Endothelial cell of umbilical vein (primary cell): ENCODE measurements at regions of chr6 and their contacts with region 1.

Region 1: DNA sequence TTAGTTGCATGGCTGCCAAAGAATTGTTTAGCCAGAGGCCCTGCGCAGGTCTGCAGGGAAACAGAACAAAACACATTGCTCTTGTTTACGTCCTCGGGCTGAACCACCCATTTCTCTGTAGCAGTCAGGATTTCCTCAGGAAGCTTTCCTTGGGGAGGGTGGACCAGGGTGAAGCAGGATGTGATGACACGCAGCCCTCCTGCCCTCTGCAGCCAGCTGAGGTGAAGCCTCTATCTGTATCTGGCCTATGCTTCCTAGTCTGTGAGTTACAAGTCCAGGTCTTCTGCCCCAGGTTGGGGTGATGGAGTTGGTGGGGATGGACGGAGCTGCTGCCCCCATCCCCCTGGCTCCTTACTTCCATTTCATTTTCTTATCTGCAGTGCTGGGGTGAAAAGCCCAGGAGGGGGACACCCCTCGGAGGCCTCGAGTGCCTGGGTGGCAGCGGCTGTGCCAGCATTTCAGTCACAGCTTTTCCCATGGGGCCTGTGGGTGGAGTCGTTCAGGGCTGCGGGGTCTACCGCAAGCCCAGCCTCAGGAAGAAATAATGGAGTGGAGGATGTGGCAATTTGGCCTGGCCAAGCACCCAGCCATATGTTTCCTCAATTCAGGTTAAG is 24.9 kb downstream of the SASH1 start:
- DNase-seq: peak; percentile 99
- H3K4me3 ChIP-seq: no peak overlapping the region
- H3K27ac ChIP-seq: peak overlapping the region; percentile 96
- H3K4me1 ChIP-seq: peaks cover 75% of the 10 kb centered on the region
- H3K27me3 ChIP-seq: no peaks in the 10 kb centered on the region
- CTCF ChIP-seq: no peak
- POLR2A ChIP-seq: no peak

Region 2: DNA sequence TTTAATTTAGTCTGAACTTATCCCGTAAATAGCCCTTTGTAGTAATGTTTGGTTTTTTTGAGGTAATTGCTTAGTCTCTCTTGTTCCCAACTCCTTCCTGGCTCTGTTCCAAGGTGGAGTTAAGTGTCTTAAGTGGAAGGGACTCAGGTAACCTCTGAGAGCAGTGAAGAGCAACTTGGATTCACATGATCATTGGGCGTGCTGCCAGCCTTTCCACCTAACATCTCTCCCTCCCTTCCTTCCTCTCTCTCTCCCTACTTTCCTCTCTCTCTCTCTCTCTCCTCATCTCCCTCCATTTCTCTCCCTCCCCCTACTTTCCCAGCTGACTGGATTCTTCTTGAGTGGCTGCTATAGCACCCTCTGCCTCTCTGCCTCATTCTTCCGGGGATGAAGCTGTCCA is 257.8 kb before region 1 on chr6:
- CTCF ChIA-PET with region 1: no interaction called
- POLR2A ChIA-PET with region 1: no interaction called
- dilution Hi-C with region 1: no loop called
- intact Hi-C with region 1: no loop called
- DNase-seq: no peak
- H3K4me3 ChIP-seq: no peak overlapping the region
- H3K27ac ChIP-seq: no peak overlapping the region
- H3K4me1 ChIP-seq: no peaks in the 10 kb centered on the region
- H3K27me3 ChIP-seq: no peaks in the 10 kb centered on the region
- CTCF ChIP-seq: no peak
- POLR2A ChIP-seq: no peak

Region 3: DNA sequence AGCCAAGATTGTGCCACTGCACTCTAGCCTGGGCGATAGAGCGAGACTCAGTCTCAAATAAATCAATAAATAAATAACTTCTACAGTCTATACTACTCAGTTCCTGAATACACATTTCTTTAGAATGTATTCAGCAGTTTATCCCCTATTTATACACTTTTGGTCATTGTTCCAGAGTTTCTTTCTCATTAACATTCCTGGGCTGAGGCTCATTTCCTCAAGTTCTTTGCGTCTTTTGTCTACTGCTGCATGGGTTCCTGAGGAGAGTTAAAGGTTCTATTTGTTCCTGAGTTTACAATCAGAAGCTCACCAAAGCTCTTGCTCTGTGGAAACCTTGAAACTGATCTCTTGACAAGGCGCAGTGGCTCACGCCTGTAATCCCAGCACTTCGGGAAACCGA is 62.5 kb before region 1 on chr6:
- CTCF ChIA-PET with region 1: no interaction called
- POLR2A ChIA-PET with region 1: no interaction called
- dilution Hi-C with region 1: no loop called
- intact Hi-C with region 1: loop called (anchors 1 kb)
- DNase-seq: peak; percentile 97
- H3K4me3 ChIP-seq: no peak overlapping the region
- H3K27ac ChIP-seq: peak overlapping the region; percentile 95
- H3K4me1 ChIP-seq: peaks cover 24% of the 10 kb centered on the region
- H3K27me3 ChIP-seq: no peaks in the 10 kb centered on the region
- CTCF ChIP-seq: no peak
- POLR2A ChIP-seq: no peak

Region 4: DNA sequence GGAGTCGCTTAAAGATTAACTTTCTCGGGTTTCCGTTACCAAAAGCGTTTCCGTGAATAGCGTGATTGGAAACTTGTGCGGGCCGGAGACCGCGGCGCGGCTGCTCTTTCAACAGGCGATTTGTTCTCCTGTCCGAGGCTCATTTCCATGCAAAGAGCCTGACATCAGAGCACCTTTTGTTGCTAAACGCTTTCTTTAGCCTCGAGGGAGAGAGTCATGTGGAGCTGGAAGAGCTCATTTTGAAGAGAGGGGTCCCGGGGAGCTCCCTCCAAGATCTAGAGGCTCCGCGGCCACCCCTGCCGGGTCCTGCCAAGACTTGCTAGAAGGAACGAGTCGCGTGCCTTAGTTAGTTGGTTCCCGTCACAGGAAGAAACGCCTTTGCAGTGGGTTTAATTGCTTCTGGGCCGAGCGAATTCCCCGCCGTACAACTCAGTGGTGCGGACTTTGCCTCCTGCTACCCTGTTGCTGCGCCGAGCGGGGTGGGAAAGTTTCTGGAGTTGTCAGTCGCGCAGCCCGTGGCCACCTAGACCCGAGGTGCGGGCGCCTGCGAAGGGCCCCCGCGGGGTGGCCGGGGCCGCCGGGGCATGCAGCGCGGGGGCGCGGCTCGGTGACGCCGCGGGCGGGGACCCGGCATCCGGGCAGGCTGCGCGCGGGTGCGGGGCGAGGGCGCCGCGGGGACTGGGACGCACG is 25.0 kb before region 1 on chr6 and contains the start of gene SASH1:
- CTCF ChIA-PET with region 1: interaction called, 36 read pairs
- POLR2A ChIA-PET with region 1: interaction called, 6 read pairs
- dilution Hi-C with region 1: no loop called
- intact Hi-C with region 1: loop called (anchors 1 kb)
- DNase-seq: peak; percentile 89
- H3K4me3 ChIP-seq: peak within 1 kb of the TSS; percentile 69 to 97 (median 96)
- H3K27ac ChIP-seq: peak within 1 kb of the TSS; percentile 94
- H3K4me1 ChIP-seq: peaks cover 53% of the 10 kb centered on the region
- H3K27me3 ChIP-seq: no peaks in the 10 kb centered on the region
- CTCF ChIP-seq: no peak
- POLR2A ChIP-seq: no peak
- total RNA-seq, gene SASH1: 97.5 and 103 TPM in 2 replicates

Region 5: DNA sequence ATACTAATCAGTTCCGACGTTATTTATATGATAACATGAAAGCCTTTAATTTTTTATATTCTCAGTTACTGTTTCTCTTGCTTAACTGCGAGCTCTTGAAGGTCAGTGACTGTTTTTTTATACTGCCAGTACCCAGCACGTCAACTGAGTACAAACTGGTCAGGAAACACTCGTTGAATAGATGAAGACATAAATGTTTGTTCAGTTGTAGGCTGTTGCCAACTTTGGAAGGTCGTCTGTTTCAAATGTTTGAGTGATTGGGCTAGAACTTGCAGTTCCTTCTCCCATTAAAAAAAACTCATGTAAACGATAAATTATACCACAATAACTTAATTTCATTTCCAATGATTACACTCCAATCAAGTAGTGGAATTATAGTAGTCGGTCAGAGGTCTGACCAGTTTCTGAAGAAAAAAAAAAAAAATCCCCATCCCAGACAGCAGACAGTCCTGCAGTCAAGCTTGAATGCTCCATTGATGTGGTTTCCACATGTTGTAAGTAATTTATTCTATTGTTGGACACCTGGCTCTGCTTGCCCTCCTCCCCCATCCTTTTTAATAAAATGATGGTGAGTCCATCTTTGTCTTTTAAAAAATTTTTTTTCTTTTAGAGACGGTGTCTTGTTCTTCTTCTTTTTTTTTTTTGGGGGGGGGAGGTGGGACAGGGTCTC is 56.2 kb after region 1 on chr6:
- CTCF ChIA-PET with region 1: interaction called, 3 read pairs
- POLR2A ChIA-PET with region 1: interaction called, 4 read pairs
- dilution Hi-C with region 1: no loop called
- intact Hi-C with region 1: loop called (anchors 1 kb)
- DNase-seq: peak; percentile 96
- H3K4me3 ChIP-seq: no peak overlapping the region
- H3K27ac ChIP-seq: peak overlapping the region; percentile 75
- H3K4me1 ChIP-seq: peaks cover 69% of the 10 kb centered on the region
- H3K27me3 ChIP-seq: no peaks in the 10 kb centered on the region
- CTCF ChIP-seq: no peak
- POLR2A ChIP-seq: peak; percentile 54

Region 6: GRCh38 chr6:148457137-148457842 is 89.8 kb after region 1 on chr6:
- CTCF ChIA-PET with region 1: interaction called, 12 read pairs
- POLR2A ChIA-PET with region 1: interaction called, 6 read pairs
- dilution Hi-C with region 1: no loop called
- intact Hi-C with region 1: loop called (anchors 1 kb)
- DNase-seq: peak; percentile 93
- H3K4me3 ChIP-seq: peak overlapping the region in 1 of 3 experiments; percentile 13
- H3K27ac ChIP-seq: peak overlapping the region; percentile 99
- H3K4me1 ChIP-seq: peaks cover 79% of the 10 kb centered on the region
- H3K27me3 ChIP-seq: no peaks in the 10 kb centered on the region
- CTCF ChIP-seq: no peak
- POLR2A ChIP-seq: no peak

Region 7: DNA sequence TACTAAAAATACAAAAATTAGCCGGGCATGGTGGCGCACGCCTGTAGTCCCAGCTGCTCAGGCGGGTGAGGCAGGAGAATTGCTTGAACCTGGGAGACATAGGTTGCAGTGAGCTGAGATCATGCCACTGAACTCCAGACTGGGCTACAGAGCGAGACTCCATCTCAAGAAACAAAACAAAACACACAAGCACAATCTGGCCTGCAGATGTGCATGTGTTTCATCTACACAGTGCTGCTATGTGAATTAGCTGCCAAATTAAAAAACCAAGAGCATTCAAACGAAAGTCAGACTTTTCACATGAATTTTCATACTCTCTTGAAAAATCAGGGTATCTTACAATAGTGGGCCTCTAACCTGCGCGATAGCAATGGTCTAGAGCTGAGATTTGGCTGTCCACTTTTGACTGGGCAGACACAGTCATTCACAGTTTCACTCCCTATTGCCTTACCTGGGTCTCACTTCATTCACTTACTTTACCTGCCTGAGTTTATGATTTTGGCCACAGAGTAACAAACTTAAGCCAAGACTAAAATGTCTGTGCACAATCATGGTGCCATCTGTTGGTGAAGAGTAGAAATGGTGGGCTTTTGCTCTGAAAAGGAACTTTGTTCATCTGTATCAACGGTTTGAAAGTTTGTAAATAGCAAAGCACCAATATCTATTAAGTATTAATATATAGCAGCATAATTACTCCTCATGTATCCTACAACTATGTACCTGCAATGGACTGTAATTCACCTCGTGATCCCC is 240.9 kb after region 1 on chr6:
- CTCF ChIA-PET with region 1: no interaction called
- POLR2A ChIA-PET with region 1: no interaction called
- dilution Hi-C with region 1: no loop called
- intact Hi-C with region 1: no loop called
- DNase-seq: peak; percentile 51
- H3K4me3 ChIP-seq: no peak overlapping the region
- H3K27ac ChIP-seq: no peak overlapping the region
- H3K4me1 ChIP-seq: no peaks in the 10 kb centered on the region
- H3K27me3 ChIP-seq: no peaks in the 10 kb centered on the region
- CTCF ChIP-seq: peak; percentile 40 to 59
- POLR2A ChIP-seq: no peak